H1 (cell line): ENCODE measurements at regions of chr19 and their contacts with region 1.

Region 1: DNA sequence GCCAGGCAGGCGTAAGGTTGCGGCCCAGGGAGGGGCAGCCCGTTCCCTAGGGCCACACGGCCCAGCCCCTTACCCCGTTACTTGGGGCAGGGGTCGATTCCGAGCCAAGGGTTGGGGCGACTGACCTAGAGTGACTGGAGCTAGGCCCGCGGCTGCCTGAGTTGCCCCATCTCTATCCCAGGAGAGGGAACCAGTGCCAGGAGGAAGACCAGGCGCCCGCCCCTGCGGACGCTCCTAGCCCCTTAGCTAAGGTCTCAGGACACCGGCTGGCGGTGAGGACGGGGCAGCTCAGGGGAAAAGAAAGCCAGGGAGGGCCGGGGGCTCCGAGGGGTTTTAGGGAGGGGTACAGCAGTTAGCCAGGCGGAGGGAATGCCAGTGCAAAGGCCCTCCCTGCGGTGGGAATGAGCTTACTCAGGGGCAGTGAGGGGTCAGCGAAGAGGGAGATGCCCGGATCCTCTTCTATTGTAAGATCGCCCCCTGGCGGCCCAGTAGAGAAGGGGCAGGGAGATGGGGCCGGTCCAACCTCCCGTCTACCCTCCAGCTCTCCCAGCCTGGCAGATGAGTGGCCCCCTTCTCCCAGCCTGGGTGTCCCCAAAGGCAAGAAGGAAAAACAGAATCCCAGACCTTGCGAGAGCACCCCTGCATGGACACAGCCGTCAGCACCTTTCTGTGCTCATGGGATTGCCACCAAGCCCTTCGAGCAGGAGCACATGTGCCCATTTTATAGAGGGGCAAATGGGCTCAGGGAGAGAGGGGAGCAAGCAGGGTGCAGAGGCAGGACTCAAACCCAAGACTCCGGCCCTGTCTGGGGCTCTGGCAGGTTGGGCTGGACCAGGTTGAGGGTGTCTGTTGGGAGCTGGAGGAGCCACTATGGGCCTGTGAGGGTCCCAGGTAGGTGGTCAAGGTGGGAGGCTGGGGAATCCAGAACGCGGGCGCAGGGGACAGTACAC is 16.3 kb downstream of the CILP2 start:
- DNase-seq: peak in 1 of 2 experiments; percentile 94
- H3K4me3 ChIP-seq: no peak overlapping the region
- H3K27ac ChIP-seq: no peak overlapping the region
- H3K4me1 ChIP-seq: no peaks in the 10 kb centered on the region; a peak in 3 of 7 replicates
- H3K27me3 ChIP-seq: no peaks in the 10 kb centered on the region
- CTCF ChIP-seq: peak; percentile 83 to 92 (median 84)
- EP300 ChIP-seq: no peak
- POLR2A ChIP-seq: no peak
- RAD21 ChIP-seq: peak; percentile 65 to 70

Region 2: DNA sequence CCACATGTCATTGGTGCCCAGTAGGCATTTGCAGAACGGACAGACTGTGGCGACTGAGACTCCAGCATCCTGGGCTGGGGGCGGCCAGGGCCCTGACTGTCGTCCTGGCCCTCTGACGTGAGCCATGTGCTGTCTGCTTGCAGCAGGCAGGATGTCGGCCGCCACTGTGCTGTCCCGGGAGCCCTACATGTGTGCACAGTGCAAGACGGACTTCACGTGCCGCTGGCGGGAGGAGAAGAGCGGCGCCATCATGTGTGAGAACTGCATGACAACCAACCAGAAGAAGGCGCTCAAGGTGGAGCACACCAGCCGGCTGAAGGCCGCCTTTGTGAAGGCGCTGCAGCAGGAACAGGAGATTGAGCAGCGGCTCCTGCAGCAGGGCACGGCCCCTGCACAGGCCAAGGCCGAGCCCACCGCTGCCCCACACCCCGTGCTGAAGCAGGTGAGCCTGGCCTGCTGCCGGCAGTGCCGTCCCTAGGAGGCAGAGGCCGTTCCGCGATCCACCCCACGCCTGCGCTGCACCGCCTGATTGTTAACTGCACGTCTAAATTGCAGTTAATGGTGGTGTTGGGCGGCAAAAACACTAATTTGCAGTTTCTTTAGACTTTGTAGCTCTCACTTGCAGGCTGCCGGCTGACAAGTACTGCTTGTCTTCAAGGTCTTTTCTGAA is 53.2 kb before region 1 on chr19:
- CTCF ChIA-PET with region 1: no interaction called
- POLR2A ChIA-PET with region 1: no interaction called
- DNase-seq: no peak
- H3K4me3 ChIP-seq: no peak overlapping the region
- H3K27ac ChIP-seq: no peak overlapping the region
- H3K4me1 ChIP-seq: no peaks in the 10 kb centered on the region
- H3K27me3 ChIP-seq: no peaks in the 10 kb centered on the region
- CTCF ChIP-seq: no peak
- EP300 ChIP-seq: no peak
- POLR2A ChIP-seq: no peak
- RAD21 ChIP-seq: no peak

Region 3: DNA sequence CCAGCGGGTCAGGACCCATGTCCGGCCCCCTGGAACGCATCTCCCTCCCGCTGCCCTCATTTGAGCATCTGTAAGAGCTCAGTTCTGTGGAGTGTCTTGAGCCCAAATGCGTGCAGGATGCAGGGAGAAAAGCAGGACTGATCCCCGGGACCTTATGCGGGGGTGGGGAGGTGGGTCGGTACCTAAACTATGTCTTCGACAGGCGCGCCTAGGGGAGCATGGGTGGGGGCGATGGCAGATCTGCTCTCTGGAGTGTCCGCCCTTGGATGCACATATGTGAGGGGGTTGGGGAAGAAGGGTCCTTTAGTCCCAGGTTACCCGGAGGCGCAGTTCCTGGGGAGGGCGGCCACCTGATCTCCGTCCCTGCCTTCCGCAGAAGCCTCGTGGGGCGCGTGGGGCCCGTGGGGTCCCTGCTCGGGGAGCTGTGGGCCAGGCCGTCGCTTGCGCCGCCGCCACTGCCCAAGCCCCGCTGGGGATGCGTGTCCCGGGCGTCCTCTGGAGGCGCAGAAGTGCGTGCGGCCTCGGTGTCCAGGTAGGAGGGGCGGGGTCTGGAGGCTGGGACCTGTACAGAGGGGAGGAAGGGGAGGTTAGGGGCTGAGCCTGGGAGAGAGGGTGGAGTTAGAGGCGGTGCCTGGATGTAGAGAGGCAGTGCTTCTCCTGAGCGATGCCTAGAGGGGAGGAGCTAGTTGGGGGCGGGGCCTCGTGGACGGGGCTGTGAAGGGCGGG is 13.5 kb before region 1 on chr19:
- CTCF ChIA-PET with region 1: interaction called, 223 read pairs
- POLR2A ChIA-PET with region 1: interaction called, 6 read pairs
- DNase-seq: peak; percentile 94 to 98
- H3K4me3 ChIP-seq: peak overlapping the region; percentile 3 to 55 (median 46); a peak in 7 of 8 replicates
- H3K27ac ChIP-seq: no peak overlapping the region
- H3K4me1 ChIP-seq: peaks cover 0 to 8% (median 3%) of the 10 kb centered on the region in 4 experiments; a peak in 3 of 7 replicates
- H3K27me3 ChIP-seq: peaks cover 6 to 26% (median 20%) of the 10 kb centered on the region in 4 experiments
- CTCF ChIP-seq: peak; percentile 11 to 36 (median 20); a peak in 3 of 4 replicates
- EP300 ChIP-seq: no peak
- POLR2A ChIP-seq: no peak
- RAD21 ChIP-seq: peak in 1 of 2 experiments; percentile 17; a peak in 1 of 4 replicates

Region 4: DNA sequence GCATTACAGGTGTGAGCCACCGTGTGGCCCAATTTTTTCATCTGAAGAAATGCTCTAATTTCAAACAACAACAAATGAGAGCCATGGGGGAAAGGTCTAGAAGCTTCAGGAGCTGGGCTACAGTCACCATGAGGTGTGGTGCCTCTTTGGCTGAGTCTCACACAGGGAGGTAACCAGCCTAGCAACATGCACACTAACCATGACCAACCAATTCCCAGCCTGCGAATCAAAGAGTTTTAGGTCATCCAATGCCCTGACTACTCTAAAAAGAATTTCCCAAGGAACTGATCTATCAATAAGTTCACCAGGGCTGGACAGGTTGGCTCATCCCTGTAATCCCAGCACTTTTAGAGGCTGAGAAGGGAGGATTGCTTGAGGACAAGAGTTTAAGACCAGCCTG is 34.2 kb after region 1 on chr19:
- CTCF ChIA-PET with region 1: interaction called, 101 read pairs
- POLR2A ChIA-PET with region 1: no interaction called
- DNase-seq: no peak
- H3K4me3 ChIP-seq: no peak overlapping the region
- H3K27ac ChIP-seq: no peak overlapping the region
- H3K4me1 ChIP-seq: peaks cover 5 to 12% (median 9%) of the 10 kb centered on the region in 4 experiments
- H3K27me3 ChIP-seq: no peaks in the 10 kb centered on the region
- CTCF ChIP-seq: no peak
- EP300 ChIP-seq: no peak
- POLR2A ChIP-seq: no peak
- RAD21 ChIP-seq: no peak

Region 5: DNA sequence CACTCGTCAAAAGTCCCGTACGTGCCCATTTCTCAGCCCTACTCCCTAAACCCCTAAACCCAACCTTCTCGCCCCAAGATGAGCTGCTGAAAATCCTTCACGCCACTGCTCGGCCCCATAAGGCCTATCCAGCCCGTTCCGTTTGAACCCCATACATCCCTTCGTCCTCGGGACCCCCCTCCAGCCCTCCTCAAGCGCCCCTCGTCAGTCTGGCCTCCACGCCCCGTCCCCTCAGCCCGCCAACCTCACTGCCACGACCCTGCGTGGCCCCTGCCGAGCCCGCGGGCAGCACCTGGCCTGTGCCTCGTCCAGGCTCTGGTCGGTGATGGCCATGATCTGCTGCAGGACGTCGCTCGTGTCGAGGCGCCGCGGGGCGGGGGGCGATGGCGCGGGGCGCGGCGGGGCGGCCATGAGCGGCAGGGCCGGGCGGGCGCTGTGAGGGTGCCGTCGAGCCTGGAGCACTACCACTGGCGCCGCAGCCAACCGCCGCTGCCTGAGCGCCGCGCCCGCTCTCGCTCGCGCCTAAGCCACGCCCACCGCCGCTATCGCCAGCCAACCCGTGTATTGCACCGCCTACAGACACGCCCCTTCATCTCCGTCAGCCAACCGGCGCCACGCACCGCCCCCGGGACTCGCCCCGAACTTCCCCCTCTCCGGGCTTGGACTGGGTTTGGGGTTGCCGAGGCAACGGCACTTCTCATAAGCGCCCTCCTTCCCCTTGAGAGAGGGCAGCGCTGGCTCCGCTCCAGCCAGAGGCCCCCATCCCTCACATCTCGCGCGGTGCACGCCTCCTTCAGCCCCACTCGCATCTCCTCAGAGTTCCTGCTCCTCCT is 64.1 kb after region 1 on chr19 and contains the start of gene PBX4:
- CTCF ChIA-PET with region 1: interaction called, 16 read pairs
- POLR2A ChIA-PET with region 1: no interaction called
- DNase-seq: peak; percentile 91 to 99
- H3K4me3 ChIP-seq: peak within 1 kb of the TSS; percentile 54 to 69 (median 60)
- H3K27ac ChIP-seq: no peak within 1 kb of the TSS
- H3K4me1 ChIP-seq: 0 out of 7 replicates have a peak, but pooled peaks cover 0 to 3% (median under 1%) of the 10 kb centered on the region in 4 experiments
- H3K27me3 ChIP-seq: peaks cover 0 to 5% (median 3%) of the 10 kb centered on the region in 4 experiments; a peak in 6 of 7 replicates
- CTCF ChIP-seq: no peak
- EP300 ChIP-seq: no peak
- POLR2A ChIP-seq: peak in 1 of 2 experiments; percentile 42; a peak in 1 of 3 replicates
- RAD21 ChIP-seq: no peak; a peak in 1 of 4 replicates
- total RNA-seq, gene PBX4: 3.3 and 3.4 TPM in 2 replicates

Region 6: GRCh38 chr19:19657397-19657783 is 103.0 kb after region 1 on chr19:
- CTCF ChIA-PET with region 1: interaction called, 38 read pairs
- POLR2A ChIA-PET with region 1: no interaction called
- DNase-seq: no peak
- H3K4me3 ChIP-seq: no peak overlapping the region
- H3K27ac ChIP-seq: no peak overlapping the region
- H3K4me1 ChIP-seq: peaks cover 2 to 8% (median 3%) of the 10 kb centered on the region in 4 experiments; a peak in 5 of 7 replicates
- H3K27me3 ChIP-seq: no peaks in the 10 kb centered on the region
- CTCF ChIP-seq: no peak
- EP300 ChIP-seq: no peak
- POLR2A ChIP-seq: no peak
- RAD21 ChIP-seq: no peak